Thyroid gland (tissue), 4 donors: ENCODE measurements at regions of chr17 and their contacts with region 1.

Region 1: GRCh38 chr17:45284176-45285140 is 22.6 kb upstream of the SPATA32 start:
- DNase-seq: no peak
- H3K4me3 ChIP-seq: no peak overlapping the region
- H3K27ac ChIP-seq: no peak overlapping the region
- H3K4me1 ChIP-seq: peaks cover 20 to 29% of the 10 kb centered on the region in 2 donors
- H3K27me3 ChIP-seq: no peaks in the 10 kb centered on the region
- CTCF ChIP-seq: no peak
- POLR2A ChIP-seq: no peak

Region 2: DNA sequence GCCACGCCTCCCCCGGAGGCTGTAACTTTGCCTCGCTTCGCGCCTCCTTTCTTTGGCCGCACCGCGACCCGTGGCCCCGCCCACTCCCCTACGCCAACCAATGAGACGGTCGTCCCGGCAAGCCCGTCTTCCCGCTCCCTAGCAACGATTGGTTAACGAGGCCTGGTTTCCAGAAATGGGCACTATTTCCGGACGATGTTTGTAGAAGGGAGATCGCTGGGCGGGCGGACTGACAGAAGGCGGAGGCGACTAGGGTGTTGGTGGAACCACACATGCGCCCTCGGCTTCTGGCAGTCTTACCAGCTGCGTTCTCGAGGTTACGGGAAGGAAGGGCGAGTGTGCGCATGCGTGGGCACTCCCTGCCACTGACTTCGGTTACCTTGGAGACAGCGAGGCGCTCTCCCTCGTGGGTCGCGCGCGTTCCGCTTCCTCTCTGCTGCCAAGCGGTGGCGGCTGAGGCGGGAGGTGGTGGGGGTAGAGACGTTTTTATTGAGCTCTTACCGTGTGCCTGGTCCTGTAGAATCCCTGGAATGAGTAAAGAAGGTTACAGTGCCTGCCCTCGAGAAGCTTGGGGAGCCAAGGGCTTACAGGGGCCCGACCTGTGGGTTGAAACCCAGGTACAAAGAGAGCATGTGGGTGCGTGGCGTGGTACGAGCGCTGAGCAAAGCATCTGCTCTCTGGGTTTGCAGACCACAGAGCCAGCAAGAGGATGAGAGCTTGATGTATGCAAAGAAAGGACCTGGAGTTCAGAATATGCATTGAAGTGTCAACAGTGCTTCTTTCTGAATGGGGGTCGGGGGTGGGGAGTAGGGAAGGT is 32.9 kb after region 1 on chr17:
- intact Hi-C with region 1: loop called (anchors 5 kb)
- DNase-seq: peak; percentile 100
- H3K4me3 ChIP-seq: peak overlapping the region in 2 of 3 donors; percentile 48 to 70
- H3K27ac ChIP-seq: peak overlapping the region; percentile 82 to 86 (median 83)
- H3K4me1 ChIP-seq: peaks cover 29 to 55% of the 10 kb centered on the region in 2 donors
- H3K27me3 ChIP-seq: no peaks in the 10 kb centered on the region
- CTCF ChIP-seq: peak in 1 of 6 experiments; percentile 20
- POLR2A ChIP-seq: peak in 1 of 2 donors; percentile 39